ENCODE measurements at regions of chr9 and their contacts with region 1.

Region 1: DNA sequence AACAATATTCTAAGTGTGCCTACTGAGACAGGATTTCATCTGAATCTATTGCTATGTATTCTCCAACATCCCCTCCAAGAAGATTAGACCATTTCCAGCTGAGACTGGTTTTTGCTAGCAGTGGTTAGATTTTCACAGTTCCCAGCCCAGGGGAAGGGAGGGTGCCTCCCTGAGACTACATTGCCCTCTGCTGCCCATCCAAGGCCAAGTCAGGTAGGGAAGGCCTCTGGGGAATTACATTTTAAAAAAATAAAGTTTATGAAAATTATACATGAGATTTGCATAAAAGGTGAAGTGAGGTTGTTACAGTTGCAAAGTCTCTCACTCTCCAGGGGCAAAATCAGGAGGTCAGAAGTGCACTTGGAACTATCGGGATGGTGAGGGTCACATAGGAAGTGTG is 28.0 kb upstream of the SYK start:
- DNase-seq: peak; percentile 19 to 37 (median 35)
- H3K4me3 ChIP-seq: no peak overlapping the region
- H3K27ac ChIP-seq: no peak overlapping the region
- H3K4me1 ChIP-seq: peaks cover 13 to 36% (median 22%) of the 10 kb centered on the region in 4 experiments
- H3K27me3 ChIP-seq: no peaks in the 10 kb centered on the region

Region 2: GRCh38 chr9:90838100-90838499 is 64.5 kb after region 1 on chr9:
- CTCF ChIA-PET with region 1: interaction called, 12 read pairs
- POLR2A ChIA-PET with region 1: no interaction called
- DNase-seq: peak in 2 of 3 donors; percentile 55 to 57
- H3K4me3 ChIP-seq: no peak overlapping the region
- H3K27ac ChIP-seq: no peak overlapping the region
- H3K4me1 ChIP-seq: peaks cover 7 to 57% (median 50%) of the 10 kb centered on the region in 4 experiments
- H3K27me3 ChIP-seq: no peaks in the 10 kb centered on the region

Region 3: GRCh38 chr9:90942555-90942954 is 168.9 kb after region 1 on chr9:
- CTCF ChIA-PET with region 1: no interaction called
- POLR2A ChIA-PET with region 1: no interaction called
- DNase-seq: no peak
- H3K4me3 ChIP-seq: no peak overlapping the region
- H3K27ac ChIP-seq: no peak overlapping the region
- H3K4me1 ChIP-seq: no peaks in the 10 kb centered on the region
- H3K27me3 ChIP-seq: peaks cover 0 to 9% (median 0%) of the 10 kb centered on the region in 5 experiments